ENCODE measurements at regions of chr1 and their contacts with region 1.

Region 1: GRCh38 chr1:77900687-77901293 is 12.4 kb downstream of the NEXN start:
- DNase-seq: peak; percentile 44
- H3K4me3 Mint-ChIP-seq: no peak overlapping the region
- H3K27ac Mint-ChIP-seq: no peak overlapping the region
- H3K4me1 Mint-ChIP-seq: peaks cover 9% of the 10 kb centered on the region
- H3K27me3 Mint-ChIP-seq: no peaks in the 10 kb centered on the region
- CTCF ChIP-seq: peak; percentile 52

Region 2: GRCh38 chr1:77582905-77583304 is 317.9 kb before region 1 on chr1:
- CTCF ChIA-PET with region 1: no interaction called
- intact Hi-C with region 1: loop called (anchors 10 kb)
- DNase-seq: no peak
- H3K4me3 Mint-ChIP-seq: no peak overlapping the region
- H3K27ac Mint-ChIP-seq: no peak overlapping the region
- H3K4me1 Mint-ChIP-seq: no peaks in the 10 kb centered on the region
- H3K27me3 Mint-ChIP-seq: no peaks in the 10 kb centered on the region
- CTCF ChIP-seq: no peak

Region 3: DNA sequence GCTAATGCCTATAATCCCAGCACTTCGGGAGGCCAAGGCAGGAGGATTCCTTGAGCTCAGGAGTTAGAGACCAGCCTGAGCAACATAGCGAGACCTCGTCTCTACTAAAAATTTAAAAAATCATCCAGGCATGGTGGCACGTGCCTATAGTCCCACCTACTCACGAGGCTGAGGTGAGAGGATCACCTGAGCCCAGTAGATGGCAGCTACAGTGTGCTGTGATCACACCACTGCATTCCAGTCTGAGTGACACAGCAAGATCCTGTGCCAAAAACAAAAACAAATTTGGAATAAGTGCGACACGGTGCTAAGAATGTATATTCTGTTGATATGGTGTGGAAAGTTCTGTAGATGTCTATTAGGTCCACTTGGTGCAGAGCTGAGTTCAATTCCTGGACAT is 156.2 kb before region 1 on chr1:
- CTCF ChIA-PET with region 1: no interaction called
- intact Hi-C with region 1: loop called (anchors 5 kb)
- DNase-seq: no peak
- H3K4me3 Mint-ChIP-seq: no peak overlapping the region
- H3K27ac Mint-ChIP-seq: peak overlapping the region; percentile 2
- H3K4me1 Mint-ChIP-seq: peaks cover 43% of the 10 kb centered on the region
- H3K27me3 Mint-ChIP-seq: no peaks in the 10 kb centered on the region
- CTCF ChIP-seq: no peak

Region 4: DNA sequence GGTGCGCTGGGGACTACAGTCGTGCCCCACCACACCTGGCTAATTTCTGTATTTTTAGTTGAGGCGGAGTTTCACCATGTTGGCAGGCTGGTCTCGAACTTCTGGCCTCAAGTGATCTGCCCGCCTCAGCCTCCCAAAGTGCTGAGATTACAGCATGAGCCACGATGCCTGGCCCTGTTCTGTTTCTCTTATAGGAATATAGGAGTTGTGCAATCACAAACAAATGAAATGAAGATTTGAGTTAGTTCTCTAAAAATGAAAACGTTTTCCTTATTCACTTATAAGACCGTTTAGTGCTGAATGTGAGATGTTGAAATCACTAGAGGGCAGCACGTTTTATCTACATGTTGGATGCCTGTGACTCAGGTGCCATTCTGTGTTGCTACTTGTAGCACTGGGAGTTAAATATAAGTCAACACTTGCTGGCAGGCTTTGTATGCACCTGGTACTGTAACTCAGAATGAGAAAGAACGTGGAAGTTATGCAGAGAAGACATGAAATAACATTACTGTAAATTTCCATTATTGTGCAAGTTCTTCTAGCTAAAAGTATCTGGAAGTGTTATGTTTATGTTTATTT is 75.6 kb before region 1 on chr1:
- CTCF ChIA-PET with region 1: no interaction called
- intact Hi-C with region 1: loop called (anchors 1 kb)
- DNase-seq: peak; percentile 20
- H3K4me3 Mint-ChIP-seq: no peak overlapping the region
- H3K27ac Mint-ChIP-seq: no peak overlapping the region
- H3K4me1 Mint-ChIP-seq: peaks cover 5% of the 10 kb centered on the region
- H3K27me3 Mint-ChIP-seq: no peaks in the 10 kb centered on the region
- CTCF ChIP-seq: no peak

Region 5: DNA sequence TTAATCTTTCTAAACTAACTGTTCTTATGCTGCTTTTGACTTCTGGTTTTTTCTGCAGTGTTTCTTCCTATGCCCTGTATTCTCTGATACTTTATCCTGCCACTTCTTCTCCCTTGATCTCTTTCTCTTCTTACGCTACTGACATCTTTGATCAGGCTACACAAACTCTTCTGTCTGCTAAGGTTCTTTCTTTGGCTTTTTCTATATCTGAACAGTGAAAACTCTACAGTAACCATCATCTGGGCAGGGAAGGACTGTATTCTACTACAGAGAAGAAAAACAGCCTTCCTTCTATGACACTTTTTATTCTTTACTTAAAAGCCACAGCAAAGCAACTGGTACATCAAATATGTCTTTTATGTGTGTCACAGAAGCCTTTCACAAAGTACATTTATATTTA is 19.7 kb before region 1 on chr1:
- CTCF ChIA-PET with region 1: no interaction called
- intact Hi-C with region 1: no loop called
- DNase-seq: no peak
- H3K4me3 Mint-ChIP-seq: no peak overlapping the region
- H3K27ac Mint-ChIP-seq: no peak overlapping the region
- H3K4me1 Mint-ChIP-seq: no peaks in the 10 kb centered on the region
- H3K27me3 Mint-ChIP-seq: no peaks in the 10 kb centered on the region
- CTCF ChIP-seq: no peak